Tibial artery (tissue), 4 donors: ENCODE measurements at regions of chr2 and their contacts with region 1.

Region 1: DNA sequence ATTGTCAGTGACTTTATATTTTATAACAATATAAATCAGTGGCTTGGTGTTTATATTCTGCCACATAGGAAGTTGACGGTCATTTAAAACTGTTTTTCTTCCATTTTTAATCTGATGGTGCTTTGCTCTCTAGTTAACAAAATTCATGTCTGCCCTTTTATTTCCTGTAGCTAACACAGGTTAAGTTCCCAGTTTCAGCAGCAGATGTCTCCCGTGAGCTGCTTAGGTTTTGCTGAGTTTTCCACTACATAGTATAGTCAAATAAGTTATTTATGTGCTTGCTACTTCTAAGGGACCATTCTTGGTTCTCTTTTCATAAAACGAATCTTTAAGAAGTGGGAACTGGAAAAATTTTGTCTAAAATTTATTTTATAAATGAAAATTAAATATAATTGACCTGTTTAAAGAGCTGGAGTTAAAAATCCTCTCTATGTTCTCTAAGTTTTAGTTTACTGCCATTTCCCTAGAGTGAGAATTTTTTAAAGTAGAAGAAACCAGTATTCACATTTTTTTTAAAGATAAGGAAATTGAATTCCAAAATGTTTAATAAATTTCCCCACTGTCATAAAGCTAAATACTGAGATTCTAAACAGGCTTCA is 20.6 kb downstream of the HTR2B start:
- DNase-seq: peak; percentile 76 to 77
- H3K4me3 ChIP-seq: no peak overlapping the region
- H3K27ac ChIP-seq: peak overlapping the region; percentile 29 to 45
- H3K4me1 ChIP-seq: peaks cover 0 to 16% (median 2%) of the 10 kb centered on the region in 4 donors
- H3K27me3 ChIP-seq: no peaks in the 10 kb centered on the region
- CTCF ChIP-seq: peak; percentile 90 to 96

Region 2: DNA sequence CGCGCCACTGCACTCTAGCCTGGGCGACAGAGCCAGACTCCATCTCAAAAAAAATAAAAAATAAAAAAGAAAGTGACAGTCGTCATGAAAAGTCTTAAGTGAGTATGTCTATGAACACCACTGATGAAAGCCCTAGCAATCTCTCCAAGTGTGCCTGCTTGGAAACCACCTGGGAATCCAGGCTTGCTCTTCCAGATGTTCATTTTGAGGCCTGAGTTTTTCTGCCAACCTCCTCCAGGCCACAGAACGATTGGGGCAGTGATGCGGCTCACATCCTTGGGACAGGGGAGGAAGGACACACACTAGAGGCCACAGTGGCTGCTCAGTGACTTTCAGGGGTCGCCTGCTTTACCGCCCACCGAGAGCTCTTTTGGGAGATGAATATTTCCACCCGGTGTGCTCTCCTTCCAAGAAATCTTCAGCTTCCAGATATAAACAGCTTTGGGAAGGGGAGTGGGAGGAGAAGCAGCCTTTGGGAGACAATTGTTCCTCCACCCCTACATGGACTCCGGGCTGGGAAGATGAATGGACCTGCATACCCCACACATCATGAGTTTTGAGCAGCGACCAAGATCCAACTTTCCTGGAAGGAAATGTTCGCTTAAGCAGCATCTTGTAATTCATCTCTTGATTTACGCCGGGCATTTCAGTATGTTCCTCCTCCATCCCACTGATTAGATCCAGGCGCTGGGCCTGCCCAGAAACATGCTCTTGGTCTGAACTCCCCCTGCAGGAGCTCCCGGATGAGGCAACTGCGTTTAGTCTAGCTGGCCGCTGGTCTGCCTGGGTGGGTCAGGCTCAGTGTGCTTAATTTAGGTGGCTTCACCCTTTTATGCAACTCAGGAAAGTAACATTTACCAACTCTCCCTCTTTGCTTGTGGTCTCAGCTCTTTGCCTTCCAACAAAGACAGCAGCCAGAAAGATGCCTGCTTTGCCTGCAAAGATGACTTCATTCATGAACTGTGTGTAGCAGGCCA is 88.0 kb after region 1 on chr2:
- intact Hi-C with region 1: loop called (anchors 5 kb)
- DNase-seq: peak; percentile 92
- H3K4me3 ChIP-seq: no peak overlapping the region
- H3K27ac ChIP-seq: peak overlapping the region; percentile 98 to 99
- H3K4me1 ChIP-seq: peaks cover 0 to 58% (median 44%) of the 10 kb centered on the region in 4 donors
- H3K27me3 ChIP-seq: no peaks in the 10 kb centered on the region
- CTCF ChIP-seq: peak; percentile 81 to 89

Region 3: GRCh38 chr2:231212329-231212845 is 108.2 kb after region 1 on chr2:
- intact Hi-C with region 1: loop called (anchors 5 kb)
- DNase-seq: peak in 1 of 2 donors; percentile 47
- H3K4me3 ChIP-seq: no peak overlapping the region
- H3K27ac ChIP-seq: peak overlapping the region; percentile 43 to 54
- H3K4me1 ChIP-seq: peaks cover 0 to 20% (median 2%) of the 10 kb centered on the region in 4 donors
- H3K27me3 ChIP-seq: no peaks in the 10 kb centered on the region
- CTCF ChIP-seq: no peak